CD8-positive, alpha-beta T cell (primary cell): ENCODE measurements at regions of chr3 and their contacts with region 1.

Region 1: GRCh38 chr3:13633176-13633575 is 84.3 kb downstream of the FBLN2 start:
- DNase-seq: no peak
- ATAC-seq: no peak
- H3K4me3 ChIP-seq: no peak overlapping the region
- H3K4me3 Mint-ChIP-seq: no peak overlapping the region
- H3K27ac ChIP-seq: no peak overlapping the region
- H3K27ac Mint-ChIP-seq: no peak overlapping the region
- H3K4me1 ChIP-seq: no peaks in the 10 kb centered on the region
- H3K4me1 Mint-ChIP-seq: no peaks in the 10 kb centered on the region
- H3K27me3 ChIP-seq: no peaks in the 10 kb centered on the region
- H3K27me3 Mint-ChIP-seq: no peaks in the 10 kb centered on the region
- CTCF ChIP-seq: no peak

Region 2: GRCh38 chr3:13594614-13595421 is 38.4 kb before region 1 on chr3:
- CTCF ChIA-PET with region 1: no interaction called
- POLR2A ChIA-PET with region 1: no interaction called
- intact Hi-C with region 1: loop called in 1 of 2 experiments (anchors 5 kb)
- DNase-seq: no peak
- ATAC-seq: no peak
- H3K4me3 ChIP-seq: no peak overlapping the region
- H3K4me3 Mint-ChIP-seq: no peak overlapping the region
- H3K27ac ChIP-seq: no peak overlapping the region
- H3K27ac Mint-ChIP-seq: no peak overlapping the region
- H3K4me1 ChIP-seq: no peaks in the 10 kb centered on the region
- H3K4me1 Mint-ChIP-seq: peaks cover 2% of the 10 kb centered on the region
- H3K27me3 ChIP-seq: no peaks in the 10 kb centered on the region
- H3K27me3 Mint-ChIP-seq: peaks cover 2% of the 10 kb centered on the region
- CTCF ChIP-seq: no peak

Region 3: GRCh38 chr3:13687517-13687943 is 54.4 kb after region 1 on chr3:
- CTCF ChIA-PET with region 1: no interaction called
- POLR2A ChIA-PET with region 1: no interaction called
- intact Hi-C with region 1: no loop called
- DNase-seq: no peak
- ATAC-seq: no peak
- H3K4me3 ChIP-seq: no peak overlapping the region
- H3K4me3 Mint-ChIP-seq: no peak overlapping the region
- H3K27ac ChIP-seq: no peak overlapping the region
- H3K27ac Mint-ChIP-seq: no peak overlapping the region
- H3K4me1 ChIP-seq: no peaks in the 10 kb centered on the region
- H3K4me1 Mint-ChIP-seq: no peaks in the 10 kb centered on the region
- H3K27me3 ChIP-seq: no peaks in the 10 kb centered on the region
- H3K27me3 Mint-ChIP-seq: no peaks in the 10 kb centered on the region
- CTCF ChIP-seq: no peak